Esophagus squamous epithelium (tissue), 5 donors: ENCODE measurements at regions of chr16 and their contacts with region 1.

Region 1: GRCh38 chr16:4511441-4512082 is 27.0 kb downstream of the CDIP1 start:
- DNase-seq: no peak
- H3K4me3 ChIP-seq: no peak overlapping the region
- H3K27ac ChIP-seq: peak overlapping the region; percentile 26 to 72 (median 52)
- H3K4me1 ChIP-seq: peaks cover 12 to 65% (median 22%) of the 10 kb centered on the region in 3 donors
- H3K27me3 ChIP-seq: no peaks in the 10 kb centered on the region
- CTCF ChIP-seq: peak in 5 of 6 experiments; percentile 29 to 70 (median 45)
- POLR2A ChIP-seq: no peak

Region 2: DNA sequence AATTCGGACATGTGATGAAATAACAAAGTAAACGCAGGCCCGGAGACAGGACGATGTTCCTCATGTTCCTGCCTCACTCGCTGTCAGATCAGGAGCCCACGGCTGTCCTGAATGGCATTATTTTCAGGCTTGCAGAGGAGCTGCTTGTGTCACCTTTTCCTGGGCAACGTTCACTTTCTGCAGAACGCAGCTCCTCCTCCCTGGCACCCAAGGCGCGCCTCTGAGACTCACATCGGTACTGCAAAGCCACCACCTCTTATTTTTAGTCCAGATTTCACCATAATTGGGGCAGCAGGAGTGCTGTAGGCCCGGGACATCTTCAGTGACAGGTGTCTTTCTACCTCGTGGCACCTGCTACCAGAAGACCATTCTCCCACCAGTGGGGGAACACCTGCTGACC is 36.6 kb after region 1 on chr16:
- intact Hi-C with region 1: loop called (anchors 5 kb)
- DNase-seq: no peak
- H3K4me3 ChIP-seq: no peak overlapping the region
- H3K27ac ChIP-seq: no peak overlapping the region
- H3K4me1 ChIP-seq: peaks cover 0 to 7% (median 0%) of the 10 kb centered on the region in 3 donors
- H3K27me3 ChIP-seq: no peaks in the 10 kb centered on the region
- CTCF ChIP-seq: no peak
- POLR2A ChIP-seq: no peak

Region 3: DNA sequence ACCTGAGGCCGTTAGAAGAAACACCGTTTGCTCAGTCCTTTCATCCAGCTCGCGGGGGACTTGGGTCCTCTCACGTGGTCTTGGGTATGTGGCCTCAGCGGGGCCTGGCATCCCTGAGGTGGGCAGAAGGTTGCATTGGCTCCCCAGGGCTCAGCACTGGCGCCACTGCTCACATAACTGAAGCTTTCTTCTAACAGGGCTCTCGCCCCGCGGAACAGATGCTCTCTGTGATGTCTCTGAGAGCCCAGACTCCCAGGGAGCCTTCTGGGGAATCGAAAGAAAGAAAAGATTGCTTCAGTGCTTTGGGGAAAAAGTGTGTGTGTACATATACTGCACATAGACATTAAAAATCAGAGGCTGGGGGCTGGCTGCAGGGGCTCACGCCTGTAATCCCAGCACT is 123.2 kb after region 1 on chr16:
- intact Hi-C with region 1: no loop called
- DNase-seq: no peak
- H3K4me3 ChIP-seq: no peak overlapping the region
- H3K27ac ChIP-seq: no peak overlapping the region
- H3K4me1 ChIP-seq: peaks cover 0 to 11% (median 5%) of the 10 kb centered on the region in 3 donors
- H3K27me3 ChIP-seq: no peaks in the 10 kb centered on the region
- CTCF ChIP-seq: no peak
- POLR2A ChIP-seq: no peak